OCI-LY7 (cell line): ENCODE measurements at regions of chr13 and their contacts with region 1.

Region 1: DNA sequence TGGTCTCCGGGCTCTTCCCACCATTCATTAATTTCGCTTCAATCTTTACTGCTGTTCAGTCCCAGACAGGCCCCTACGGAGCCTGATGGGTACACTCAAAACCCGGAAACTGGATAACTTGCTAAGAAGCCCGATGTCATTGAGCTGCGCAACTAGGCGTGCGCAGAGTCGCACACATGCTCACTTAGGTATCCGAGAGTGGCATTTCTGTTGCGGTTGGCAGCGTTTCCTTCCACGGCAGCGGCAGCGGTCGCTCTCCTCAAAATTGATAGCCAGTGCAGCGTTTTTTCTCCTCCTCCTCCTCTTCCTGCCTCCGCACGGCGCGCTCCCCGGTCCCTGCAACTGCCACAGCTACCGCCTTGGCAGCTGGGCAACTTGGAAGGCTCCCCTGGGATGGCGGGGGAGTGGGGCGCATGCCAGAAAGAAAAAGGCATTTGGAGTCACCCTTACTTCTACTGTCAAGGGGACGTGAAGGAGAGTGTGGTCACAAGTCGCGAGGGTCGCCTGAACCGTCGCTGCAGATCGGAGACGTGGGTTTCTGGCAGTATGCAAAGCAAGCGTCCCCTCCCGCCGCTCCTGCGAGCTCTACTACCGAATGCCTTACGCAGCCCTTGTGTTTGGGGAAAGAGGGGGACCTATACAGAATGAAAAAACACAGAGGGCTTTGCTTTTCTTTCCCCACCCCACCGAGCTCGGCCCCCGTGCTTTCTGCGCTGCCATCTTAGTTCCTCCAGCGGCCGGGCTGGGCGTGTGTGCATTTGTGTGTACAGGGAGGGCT is 2.4 kb upstream of the MYCBP2 start:
- DNase-seq: peak; percentile 99
- H3K4me3 ChIP-seq: peak overlapping the region; percentile 89
- H3K27ac ChIP-seq: peak overlapping the region; percentile 97
- H3K4me1 ChIP-seq: peaks cover 45% of the 10 kb centered on the region
- CTCF ChIP-seq: no peak; the same call in 1 of the 2 replicates

Region 2: GRCh38 chr13:76397413-76397812 is 931.9 kb before region 1 on chr13:
- CTCF ChIA-PET with region 1: no interaction called
- POLR2A ChIA-PET with region 1: no interaction called
- intact Hi-C with region 1: no loop called
- DNase-seq: no peak
- H3K4me3 ChIP-seq: no peak overlapping the region
- H3K27ac ChIP-seq: no peak overlapping the region
- H3K4me1 ChIP-seq: no peaks in the 10 kb centered on the region
- CTCF ChIP-seq: no peak

Region 3: GRCh38 chr13:77026818-77027585 is 302.3 kb before region 1 on chr13 and contains the start of gene FBXL3:
- CTCF ChIA-PET with region 1: no interaction called
- POLR2A ChIA-PET with region 1: interaction called, 4 read pairs
- intact Hi-C with region 1: loop called (anchors 1 kb)
- DNase-seq: peak; percentile 91
- H3K4me3 ChIP-seq: peak within 1 kb of the TSS; percentile 98
- H3K27ac ChIP-seq: peak within 1 kb of the TSS; percentile 91
- H3K4me1 ChIP-seq: peaks cover 36% of the 10 kb centered on the region
- CTCF ChIP-seq: no peak
- total RNA-seq, gene FBXL3: 21.6 and 23.4 TPM in 2 replicates

Region 4: GRCh38 chr13:77306458-77306857 is 22.9 kb before region 1 on chr13:
- CTCF ChIA-PET with region 1: no interaction called
- POLR2A ChIA-PET with region 1: interaction called, 11 read pairs
- intact Hi-C with region 1: loop called (anchors 2 kb)
- DNase-seq: no peak
- H3K4me3 ChIP-seq: no peak overlapping the region
- H3K27ac ChIP-seq: no peak overlapping the region
- H3K4me1 ChIP-seq: peaks cover 55% of the 10 kb centered on the region
- CTCF ChIP-seq: no peak

Region 5: GRCh38 chr13:77415253-77416071 is 86.1 kb after region 1 on chr13:
- CTCF ChIA-PET with region 1: interaction called, 3 read pairs
- POLR2A ChIA-PET with region 1: interaction called, 17 read pairs
- intact Hi-C with region 1: loop called (anchors 2 kb)
- DNase-seq: peak; percentile 58
- H3K4me3 ChIP-seq: no peak overlapping the region
- H3K27ac ChIP-seq: peak overlapping the region; percentile 29
- H3K4me1 ChIP-seq: peaks cover 31% of the 10 kb centered on the region
- CTCF ChIP-seq: no peak

Region 6: GRCh38 chr13:77429320-77430142 is 100.2 kb after region 1 on chr13:
- CTCF ChIA-PET with region 1: interaction called, 4 read pairs
- POLR2A ChIA-PET with region 1: interaction called, 11 read pairs
- intact Hi-C with region 1: loop called (anchors 2 kb)
- DNase-seq: peak; percentile 82
- H3K4me3 ChIP-seq: peak overlapping the region; percentile 36
- H3K27ac ChIP-seq: peak overlapping the region; percentile 71
- H3K4me1 ChIP-seq: peaks cover 18% of the 10 kb centered on the region
- CTCF ChIP-seq: no peak

Region 7: DNA sequence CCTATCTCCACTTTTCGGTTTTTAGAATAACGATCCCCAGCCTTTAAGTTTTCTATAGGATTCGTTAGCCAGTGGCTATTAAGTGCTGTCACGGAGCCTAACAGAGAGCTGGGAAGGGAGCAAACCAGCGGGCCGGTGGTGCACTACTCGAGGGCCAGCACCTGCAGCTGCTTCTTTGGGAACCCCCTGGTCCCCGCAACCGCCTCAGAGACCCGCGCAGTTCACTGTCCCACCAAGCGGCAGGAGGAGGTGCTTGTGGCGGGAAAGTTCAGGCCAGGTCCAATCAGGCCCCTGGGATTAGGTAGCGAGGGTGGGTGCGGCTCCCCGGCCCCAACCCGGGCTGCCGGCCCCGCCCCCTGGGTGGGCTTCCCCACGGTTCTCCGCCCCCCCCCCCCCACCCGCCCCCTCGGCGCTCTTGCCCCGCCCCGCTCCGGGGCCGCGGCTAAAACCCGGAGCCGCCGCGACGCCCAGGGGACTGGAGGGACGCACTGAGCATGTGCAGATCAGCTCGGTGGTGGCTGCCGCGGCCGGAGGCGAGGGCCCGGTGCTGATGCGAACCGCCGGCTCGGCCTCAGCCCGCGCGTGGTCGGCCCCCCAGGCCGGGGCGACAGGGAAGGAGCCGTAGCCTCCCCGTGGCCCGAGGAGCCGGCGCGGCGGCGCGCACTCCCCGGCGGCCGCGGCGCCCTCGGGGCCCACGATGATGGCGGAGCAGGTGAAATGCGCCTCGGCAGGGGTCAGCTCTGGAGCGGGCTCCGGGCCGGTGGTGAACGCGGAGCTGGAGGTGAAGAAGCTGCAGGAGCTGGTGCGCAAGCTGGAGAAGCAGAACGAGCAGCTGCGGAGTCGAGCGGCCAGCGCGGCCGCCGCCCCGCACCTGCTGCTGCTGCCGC is 368.1 kb after region 1 on chr13 and contains the start of gene SLAIN1:
- CTCF ChIA-PET with region 1: no interaction called
- POLR2A ChIA-PET with region 1: no interaction called
- intact Hi-C with region 1: loop called (anchors 5 kb)
- DNase-seq: peak; percentile 92
- H3K4me3 ChIP-seq: peak within 1 kb of the TSS; percentile 73
- H3K27ac ChIP-seq: peak within 1 kb of the TSS; percentile 24
- H3K4me1 ChIP-seq: peaks cover 29% of the 10 kb centered on the region
- CTCF ChIP-seq: no peak
- total RNA-seq, gene SLAIN1: 28.5 and 31.7 TPM in 2 replicates